Left ventricle myocardium inferior (tissue), 1 donor: ENCODE measurements at regions of chr5 and their contacts with region 1.

Region 1: GRCh38 chr5:42514754-42515153 is 91.5 kb downstream of the GHR start:
- DNase-seq: no peak
- H3K4me3 ChIP-seq: no peak overlapping the region
- H3K27ac ChIP-seq: no peak overlapping the region
- H3K4me1 ChIP-seq: peaks cover 53% of the 10 kb centered on the region
- H3K27me3 ChIP-seq: no peaks in the 10 kb centered on the region
- CTCF ChIP-seq: peak; percentile 35

Region 2: DNA sequence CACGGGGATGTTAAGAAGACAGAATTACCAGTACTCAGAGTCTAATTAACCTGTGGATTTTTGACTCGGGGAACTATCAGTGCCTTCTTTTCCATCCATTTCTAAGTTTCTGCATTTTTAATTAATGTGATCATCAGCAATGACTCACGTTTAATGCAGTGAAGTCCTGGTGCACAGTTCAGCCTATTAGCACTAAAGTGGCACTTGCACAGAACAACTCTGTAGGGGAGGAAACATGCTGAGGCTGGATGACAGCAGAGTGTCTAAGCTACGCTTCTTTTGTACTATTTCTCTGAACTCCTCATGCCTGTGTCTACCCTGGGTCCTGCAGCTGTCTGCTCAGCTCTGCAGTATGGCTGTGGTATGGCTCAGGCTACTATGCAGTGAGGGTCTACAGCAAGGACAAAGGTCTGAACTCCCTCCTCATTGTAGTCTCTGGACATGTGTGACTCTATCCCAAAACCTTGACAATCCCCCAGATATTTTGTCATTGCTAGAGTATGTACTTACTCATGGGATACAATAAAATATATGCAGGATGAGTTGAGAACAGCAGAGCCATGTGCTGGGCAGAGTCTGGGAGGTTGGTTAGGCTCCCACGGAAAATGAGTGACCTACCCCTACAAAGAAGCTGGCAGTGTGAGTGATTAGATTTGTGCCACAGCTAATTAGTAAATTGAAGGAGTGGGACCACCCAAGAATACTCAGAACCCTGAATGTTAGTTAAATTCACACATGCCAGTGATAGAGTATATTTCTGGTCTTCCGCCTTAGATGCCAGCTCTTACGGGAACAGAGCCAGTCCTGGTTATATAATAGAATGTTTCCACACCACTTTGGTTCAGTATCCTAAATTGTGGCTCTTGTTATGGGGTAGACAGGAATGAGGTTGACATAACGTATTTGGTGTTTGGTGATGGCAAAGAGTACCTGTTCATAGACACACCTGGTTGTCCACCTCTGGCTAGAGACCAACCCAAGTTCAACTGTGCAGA is 56.5 kb after region 1 on chr5:
- intact Hi-C with region 1: loop called (anchors 10 kb)
- DNase-seq: no peak
- H3K4me3 ChIP-seq: no peak overlapping the region
- H3K27ac ChIP-seq: no peak overlapping the region
- H3K4me1 ChIP-seq: peaks cover 31% of the 10 kb centered on the region
- H3K27me3 ChIP-seq: no peaks in the 10 kb centered on the region
- CTCF ChIP-seq: no peak

Region 3: DNA sequence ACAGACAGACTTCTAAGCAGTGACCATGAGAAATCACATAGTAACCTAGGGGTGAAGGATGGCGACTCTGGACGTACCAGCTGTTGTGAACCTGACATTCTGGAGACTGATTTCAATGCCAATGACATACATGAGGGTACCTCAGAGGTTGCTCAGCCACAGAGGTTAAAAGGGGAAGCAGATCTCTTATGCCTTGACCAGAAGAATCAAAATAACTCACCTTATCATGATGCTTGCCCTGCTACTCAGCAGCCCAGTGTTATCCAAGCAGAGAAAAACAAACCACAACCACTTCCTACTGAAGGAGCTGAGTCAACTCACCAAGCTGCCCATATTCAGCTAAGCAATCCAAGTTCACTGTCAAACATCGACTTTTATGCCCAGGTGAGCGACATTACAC is 203.8 kb after region 1 on chr5:
- intact Hi-C with region 1: no loop called
- DNase-seq: no peak
- H3K4me3 ChIP-seq: no peak overlapping the region
- H3K27ac ChIP-seq: no peak overlapping the region
- H3K4me1 ChIP-seq: no peaks in the 10 kb centered on the region
- H3K27me3 ChIP-seq: no peaks in the 10 kb centered on the region
- CTCF ChIP-seq: no peak

Region 4: DNA sequence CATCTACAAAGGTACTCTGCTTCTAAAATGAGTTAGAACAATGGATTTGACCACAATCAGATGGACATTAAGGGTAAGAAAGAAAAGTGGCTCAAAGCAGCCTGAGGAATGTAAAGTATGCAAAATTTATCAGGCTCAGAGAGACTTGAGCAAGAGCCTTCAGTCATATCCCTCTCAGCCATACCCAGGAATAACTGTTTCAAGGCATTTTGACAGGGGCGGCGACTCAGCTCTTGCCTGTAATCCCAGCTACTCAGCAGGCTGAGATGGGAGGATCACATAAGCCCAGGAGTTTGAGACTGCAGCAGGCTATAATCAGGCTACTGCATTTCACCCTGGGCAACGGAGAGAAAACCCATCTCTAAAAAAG is 564.2 kb after region 1 on chr5:
- intact Hi-C with region 1: no loop called
- DNase-seq: no peak
- H3K4me3 ChIP-seq: no peak overlapping the region
- H3K27ac ChIP-seq: no peak overlapping the region
- H3K4me1 ChIP-seq: peaks cover 16% of the 10 kb centered on the region
- H3K27me3 ChIP-seq: no peaks in the 10 kb centered on the region
- CTCF ChIP-seq: no peak